ENCODE measurements at regions of chr11 and their contacts with region 1.

Region 1: DNA sequence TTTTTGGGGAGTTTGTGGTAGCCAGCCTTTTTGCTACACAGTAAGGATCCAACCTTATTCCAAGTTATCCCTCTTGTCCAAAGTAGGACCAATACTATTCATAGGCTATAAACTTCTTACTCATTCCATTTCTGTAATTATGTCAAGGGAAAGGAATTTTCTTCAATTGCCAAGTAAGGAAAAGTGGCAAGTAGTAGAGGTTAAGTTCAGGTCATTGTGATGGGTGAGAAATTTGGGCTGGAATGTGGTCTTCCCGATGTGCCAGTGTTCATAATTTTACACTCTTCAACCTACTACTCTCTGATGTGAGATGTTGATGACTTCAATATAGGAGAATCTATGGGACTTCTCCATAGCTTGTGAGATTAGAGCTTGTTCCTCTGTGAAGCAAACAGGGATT is 648.8 kb downstream of the METTL15 start:
- DNase-seq: peak; percentile 89
- ATAC-seq: peak; percentile 65
- H3K4me3 ChIP-seq: no peak overlapping the region
- H3K27ac ChIP-seq: peak overlapping the region; percentile 96
- H3K4me1 ChIP-seq: peaks cover 10% of the 10 kb centered on the region; the same call in 1 of the 2 replicates
- H3K27me3 ChIP-seq: no peaks in the 10 kb centered on the region
- CTCF ChIP-seq: no peak
- POLR2A ChIP-seq: 0 out of 2 replicates have a peak, but pooled peaks have one; percentile 8
- RAD21 ChIP-seq: no peak

Region 2: GRCh38 chr11:27934830-27935145 is 822.2 kb before region 1 on chr11:
- CTCF ChIA-PET with region 1: no interaction called
- POLR2A ChIA-PET with region 1: no interaction called
- dilution Hi-C with region 1: no loop called
- in situ Hi-C with region 1: no loop called
- intact Hi-C with region 1: loop called (anchors 10 kb)
- DNase-seq: peak; percentile 98
- ATAC-seq: peak; percentile 69
- H3K4me3 ChIP-seq: peak overlapping the region; percentile 11; the same call in 1 of the 2 replicates
- H3K27ac ChIP-seq: peak overlapping the region; percentile 90
- H3K4me1 ChIP-seq: peaks cover 6% of the 10 kb centered on the region
- H3K27me3 ChIP-seq: no peaks in the 10 kb centered on the region
- CTCF ChIP-seq: no peak
- POLR2A ChIP-seq: no peak; the same call in none of the 2 replicates
- RAD21 ChIP-seq: peak; percentile 29; the same call in 1 of the 2 replicates

Region 3: GRCh38 chr11:28464252-28464867 is 292.6 kb before region 1 on chr11:
- CTCF ChIA-PET with region 1: no interaction called
- POLR2A ChIA-PET with region 1: no interaction called
- dilution Hi-C with region 1: no loop called
- in situ Hi-C with region 1: no loop called
- intact Hi-C with region 1: loop called (anchors 1 kb)
- DNase-seq: peak; percentile 86
- ATAC-seq: peak; percentile 77
- H3K4me3 ChIP-seq: no peak overlapping the region
- H3K27ac ChIP-seq: peak overlapping the region; percentile 98
- H3K4me1 ChIP-seq: peaks cover 22% of the 10 kb centered on the region
- H3K27me3 ChIP-seq: no peaks in the 10 kb centered on the region
- CTCF ChIP-seq: no peak
- POLR2A ChIP-seq: no peak
- RAD21 ChIP-seq: no peak; the same call in none of the 2 replicates

Region 4: DNA sequence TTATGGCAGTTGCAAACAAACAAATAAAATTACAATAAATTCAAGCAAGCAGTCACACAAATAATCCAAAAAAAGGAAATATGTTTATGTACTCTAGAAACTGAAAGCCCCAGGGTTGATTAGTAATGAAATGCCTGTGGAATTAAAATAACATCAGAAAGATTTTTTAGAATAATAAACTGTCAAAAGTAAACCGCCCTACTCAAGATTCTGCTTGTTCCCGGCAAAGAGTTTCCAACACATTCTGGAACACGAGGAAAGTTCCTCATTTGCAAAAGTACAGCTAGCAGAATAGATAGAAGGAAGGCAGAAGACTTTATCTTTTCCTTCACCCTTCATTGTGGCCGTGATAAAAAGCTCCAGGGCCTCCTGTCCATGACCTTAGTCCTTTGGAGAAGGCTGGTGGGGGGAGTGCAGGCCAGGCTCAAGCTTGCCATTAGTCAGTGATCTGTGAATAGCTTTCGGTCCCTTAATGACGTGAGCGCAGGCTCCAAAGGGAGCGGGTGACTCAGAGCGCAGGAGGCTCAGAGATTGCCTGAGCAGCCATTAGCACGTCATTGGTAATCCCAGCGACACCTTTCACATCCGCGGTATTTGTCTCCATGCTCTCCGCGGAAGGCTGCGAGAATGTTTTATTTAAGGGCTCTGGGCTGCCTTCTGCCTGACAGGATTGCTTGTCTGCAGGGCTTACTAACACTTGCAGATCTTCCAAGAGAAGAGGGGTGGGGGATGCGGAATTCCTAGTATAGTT is 190.5 kb before region 1 on chr11:
- CTCF ChIA-PET with region 1: no interaction called
- POLR2A ChIA-PET with region 1: no interaction called
- dilution Hi-C with region 1: no loop called
- in situ Hi-C with region 1: no loop called
- intact Hi-C with region 1: loop called (anchors 1 kb)
- DNase-seq: peak; percentile 100
- ATAC-seq: peak; percentile 98
- H3K4me3 ChIP-seq: peak overlapping the region; percentile 3; the same call in 1 of the 2 replicates
- H3K27ac ChIP-seq: peak overlapping the region; percentile 78
- H3K4me1 ChIP-seq: peaks cover 5% of the 10 kb centered on the region
- H3K27me3 ChIP-seq: no peaks in the 10 kb centered on the region
- CTCF ChIP-seq: no peak
- POLR2A ChIP-seq: peak; percentile 13; the same call in 1 of the 2 replicates
- RAD21 ChIP-seq: peak; percentile 40

Region 5: DNA sequence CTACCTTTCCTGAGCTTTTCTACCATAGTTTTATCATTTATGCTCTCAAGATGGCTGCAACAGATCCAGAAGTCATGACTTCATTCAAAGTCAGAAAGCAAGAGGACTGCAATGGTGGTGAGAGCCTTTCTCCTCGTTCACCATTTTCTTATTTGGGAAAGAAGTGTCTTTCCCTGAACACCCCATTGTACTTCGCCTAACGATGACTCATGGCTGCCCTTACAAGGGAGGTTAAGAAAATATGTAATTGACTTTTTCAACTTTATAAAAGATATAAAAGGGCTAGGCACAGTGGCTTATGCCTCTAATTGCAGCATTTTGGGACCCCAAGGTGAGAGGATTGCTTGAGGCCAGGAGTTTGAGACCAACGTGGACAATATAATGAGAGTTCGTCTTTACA is 107.1 kb before region 1 on chr11:
- CTCF ChIA-PET with region 1: no interaction called
- POLR2A ChIA-PET with region 1: no interaction called
- dilution Hi-C with region 1: no loop called
- in situ Hi-C with region 1: no loop called
- intact Hi-C with region 1: no loop called
- DNase-seq: no peak
- ATAC-seq: no peak
- H3K4me3 ChIP-seq: no peak overlapping the region
- H3K27ac ChIP-seq: no peak overlapping the region
- H3K4me1 ChIP-seq: no peaks in the 10 kb centered on the region
- H3K27me3 ChIP-seq: no peaks in the 10 kb centered on the region
- CTCF ChIP-seq: no peak
- POLR2A ChIP-seq: no peak
- RAD21 ChIP-seq: no peak

Region 6: GRCh38 chr11:28932940-28933339 is 176.0 kb after region 1 on chr11:
- CTCF ChIA-PET with region 1: no interaction called
- POLR2A ChIA-PET with region 1: no interaction called
- dilution Hi-C with region 1: no loop called
- in situ Hi-C with region 1: no loop called
- intact Hi-C with region 1: no loop called
- DNase-seq: no peak
- ATAC-seq: no peak
- H3K4me3 ChIP-seq: no peak overlapping the region
- H3K27ac ChIP-seq: no peak overlapping the region
- H3K4me1 ChIP-seq: 0 out of 2 replicates have a peak, but pooled peaks cover 1% of the 10 kb centered on the region
- H3K27me3 ChIP-seq: no peaks in the 10 kb centered on the region
- CTCF ChIP-seq: no peak
- POLR2A ChIP-seq: no peak
- RAD21 ChIP-seq: no peak

Region 7: GRCh38 chr11:29019960-29020683 is 263.1 kb after region 1 on chr11:
- CTCF ChIA-PET with region 1: no interaction called
- POLR2A ChIA-PET with region 1: no interaction called
- dilution Hi-C with region 1: no loop called
- in situ Hi-C with region 1: no loop called
- intact Hi-C with region 1: loop called (anchors 5 kb)
- DNase-seq: peak; percentile 66
- ATAC-seq: peak; percentile 38
- H3K4me3 ChIP-seq: no peak overlapping the region
- H3K27ac ChIP-seq: peak overlapping the region; percentile 30; the same call in 1 of the 2 replicates
- H3K4me1 ChIP-seq: peaks cover 6% of the 10 kb centered on the region; the same call in 1 of the 2 replicates
- H3K27me3 ChIP-seq: no peaks in the 10 kb centered on the region
- CTCF ChIP-seq: peak; percentile 63
- POLR2A ChIP-seq: no peak
- RAD21 ChIP-seq: peak; percentile 55

Region 8: GRCh38 chr11:29159552-29160465 is 402.8 kb after region 1 on chr11:
- CTCF ChIA-PET with region 1: interaction called, 3 read pairs
- POLR2A ChIA-PET with region 1: interaction called, 4 read pairs
- dilution Hi-C with region 1: no loop called
- in situ Hi-C with region 1: no loop called
- intact Hi-C with region 1: loop called (anchors 1 kb)
- DNase-seq: peak; percentile 90
- ATAC-seq: peak; percentile 98
- H3K4me3 ChIP-seq: no peak overlapping the region
- H3K27ac ChIP-seq: peak overlapping the region; percentile 89
- H3K4me1 ChIP-seq: peaks cover 9% of the 10 kb centered on the region
- H3K27me3 ChIP-seq: no peaks in the 10 kb centered on the region
- CTCF ChIP-seq: peak; percentile 85
- POLR2A ChIP-seq: peak; percentile 17; the same call in 1 of the 2 replicates
- RAD21 ChIP-seq: peak; percentile 94

Region 9: DNA sequence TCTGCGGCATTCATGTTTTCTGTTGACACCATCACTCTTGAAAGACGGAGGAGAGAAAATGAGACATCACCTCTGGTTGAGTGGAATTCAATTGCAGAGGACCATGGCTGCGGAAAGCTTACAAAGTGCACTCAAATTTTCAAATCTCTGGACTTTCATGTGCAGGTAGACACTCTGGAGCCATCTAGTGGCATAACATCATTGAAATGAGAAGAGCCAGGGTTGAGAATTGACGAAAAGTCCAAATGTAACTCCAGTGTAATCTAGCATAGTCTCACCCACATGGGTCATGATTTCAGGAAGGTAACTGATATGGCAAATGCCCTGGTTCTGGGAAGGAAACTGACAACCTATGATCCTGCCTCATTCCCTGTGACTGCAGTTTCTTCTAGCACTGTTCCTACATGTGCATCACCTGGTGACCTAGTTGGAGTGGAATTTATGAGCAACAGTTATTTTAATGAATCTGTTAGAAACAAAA is 572.0 kb after region 1 on chr11:
- CTCF ChIA-PET with region 1: no interaction called
- POLR2A ChIA-PET with region 1: interaction called, 8 read pairs
- dilution Hi-C with region 1: no loop called
- in situ Hi-C with region 1: no loop called
- intact Hi-C with region 1: loop called (anchors 1 kb)
- DNase-seq: peak; percentile 95
- ATAC-seq: peak; percentile 80
- H3K4me3 ChIP-seq: no peak overlapping the region
- H3K27ac ChIP-seq: peak overlapping the region; percentile 54
- H3K4me1 ChIP-seq: peaks cover 16% of the 10 kb centered on the region
- H3K27me3 ChIP-seq: no peaks in the 10 kb centered on the region
- CTCF ChIP-seq: peak; percentile 88
- POLR2A ChIP-seq: peak; percentile 62
- RAD21 ChIP-seq: peak; percentile 89